Gastrocnemius medialis (tissue), 4 donors: ENCODE measurements at regions of chr18 and their contacts with region 1.

Region 1: DNA sequence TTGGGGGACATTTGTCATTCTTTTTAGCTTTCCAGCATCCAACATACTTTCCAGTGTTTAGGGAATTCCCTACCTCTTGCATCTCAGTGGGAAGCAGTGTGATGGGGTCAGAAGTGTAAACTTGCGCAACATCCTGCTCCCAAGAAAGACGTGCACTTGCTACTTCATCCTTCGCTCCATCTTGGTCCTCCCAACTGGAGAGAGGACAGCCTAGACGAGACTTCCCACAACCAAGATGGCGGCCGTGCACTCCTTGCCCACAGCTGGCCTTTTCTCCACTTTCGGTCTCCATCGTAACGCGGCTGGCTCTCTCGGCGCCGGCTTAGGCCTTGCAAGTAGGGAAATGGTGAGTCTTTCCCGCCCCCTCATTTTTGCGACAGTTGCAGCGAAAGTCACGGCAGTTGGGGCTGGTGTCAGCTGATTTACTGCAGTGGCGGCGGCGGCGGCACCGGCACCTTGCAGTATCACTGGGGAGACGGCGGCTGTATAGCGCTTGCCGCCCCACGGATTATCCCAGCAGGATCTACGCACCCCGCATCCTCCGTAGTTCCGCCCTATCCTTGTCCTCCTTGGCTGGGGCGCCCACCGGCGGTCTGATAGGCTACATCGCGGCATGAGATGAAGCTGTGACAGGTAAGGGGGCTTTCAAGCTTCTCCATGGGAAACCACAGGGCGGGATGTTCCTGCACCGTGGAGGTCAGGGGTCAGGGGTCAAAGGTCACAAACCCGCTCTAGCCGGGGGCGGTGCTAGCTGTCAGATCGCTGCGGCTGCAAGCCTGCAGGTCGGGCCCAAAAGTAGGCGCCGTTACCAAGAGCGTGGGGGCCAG is at the start of gene WDR7:
- DNase-seq: peak; percentile 93 to 98
- ATAC-seq: peak; percentile 98 to 99
- H3K4me3 ChIP-seq: peak within 1 kb of the TSS; percentile 71 to 97 (median 95)
- H3K27ac ChIP-seq: peak within 1 kb of the TSS; percentile 85 to 95 (median 92)
- H3K4me1 ChIP-seq: peaks cover 13 to 20% of the 10 kb centered on the region in 2 donors
- H3K27me3 ChIP-seq: no peaks in the 10 kb centered on the region
- CTCF ChIP-seq: no peak
- POLR2A ChIP-seq: peak; percentile 34 to 42
- total RNA-seq, gene WDR7: 20.5 to 24.2 (median 21.8) TPM

Region 2: DNA sequence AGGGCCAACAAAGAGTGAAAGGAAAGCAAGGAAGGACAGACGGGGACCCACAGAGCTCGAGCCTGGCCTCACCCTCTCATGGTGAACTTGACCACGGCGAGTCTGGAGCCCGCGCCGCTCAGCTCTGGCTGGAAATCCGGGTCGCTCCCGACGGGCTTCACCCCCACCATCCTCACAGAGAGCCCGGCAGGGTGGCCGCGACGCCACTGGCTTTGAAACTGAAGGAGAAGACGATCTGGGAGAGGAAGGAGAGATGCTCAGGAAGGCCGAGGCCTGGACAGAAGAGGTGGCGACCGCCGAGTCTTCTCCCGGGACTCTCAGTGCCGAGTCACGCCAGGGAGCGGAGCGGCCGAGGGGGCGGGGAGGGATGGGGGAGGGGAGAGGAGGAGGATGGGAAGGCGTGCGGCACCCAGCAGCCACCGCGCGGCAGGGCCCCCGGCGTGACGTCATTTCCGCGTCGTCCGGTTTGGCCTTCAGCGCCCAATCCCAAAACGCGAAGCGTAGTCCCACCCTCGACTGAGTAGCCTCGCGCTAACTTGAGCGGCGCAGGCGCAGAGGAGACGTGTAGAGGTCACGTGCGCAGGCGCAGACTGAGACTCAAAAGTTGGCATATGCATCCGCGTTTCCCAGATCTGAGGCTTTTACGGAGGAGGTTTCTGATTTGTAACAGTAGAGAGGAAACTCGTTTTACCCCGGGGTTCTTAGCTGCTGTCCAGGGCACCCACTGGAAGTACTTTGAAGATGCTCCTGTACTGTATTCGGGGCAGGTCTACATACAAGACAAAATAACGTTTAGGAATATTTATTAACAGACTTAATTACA is 12.7 kb before region 1 on chr18 and contains the start of gene TXNL1:
- in situ Hi-C with region 1: no loop called
- intact Hi-C with region 1: loop called (anchors 1 kb)
- DNase-seq: peak; percentile 99
- ATAC-seq: peak; percentile 96 to 97
- H3K4me3 ChIP-seq: peak within 1 kb of the TSS; percentile 92 to 96 (median 94)
- H3K27ac ChIP-seq: peak within 1 kb of the TSS; percentile 97 to 99 (median 98)
- H3K4me1 ChIP-seq: peaks cover 23 to 37% of the 10 kb centered on the region in 2 donors
- H3K27me3 ChIP-seq: no peaks in the 10 kb centered on the region
- CTCF ChIP-seq: no peak
- POLR2A ChIP-seq: peak; percentile 90 to 92
- total RNA-seq, gene TXNL1: 100 to 125 (median 116) TPM